HCT116 (cell line): ENCODE measurements at regions of chr18 and their contacts with region 1.

Region 1: GRCh38 chr18:9136315-9137155 is at the start of gene ANKRD12:
- DNase-seq: peak; percentile 89
- ATAC-seq: peak; percentile 78
- H3K4me3 ChIP-seq: peak within 1 kb of the TSS; percentile 85 to 86
- H3K27ac ChIP-seq: peak within 1 kb of the TSS; percentile 97
- H3K4me1 ChIP-seq: peaks cover 17 to 26% of the 10 kb centered on the region in 2 experiments; a peak in 3 of 4 replicates
- H3K27me3 ChIP-seq: no peaks in the 10 kb centered on the region
- CTCF ChIP-seq: no peak
- POLR2A ChIP-seq: peak; percentile 8
- RAD21 ChIP-seq: no peak
- total RNA-seq, gene ANKRD12: 23.5 TPM

Region 2: DNA sequence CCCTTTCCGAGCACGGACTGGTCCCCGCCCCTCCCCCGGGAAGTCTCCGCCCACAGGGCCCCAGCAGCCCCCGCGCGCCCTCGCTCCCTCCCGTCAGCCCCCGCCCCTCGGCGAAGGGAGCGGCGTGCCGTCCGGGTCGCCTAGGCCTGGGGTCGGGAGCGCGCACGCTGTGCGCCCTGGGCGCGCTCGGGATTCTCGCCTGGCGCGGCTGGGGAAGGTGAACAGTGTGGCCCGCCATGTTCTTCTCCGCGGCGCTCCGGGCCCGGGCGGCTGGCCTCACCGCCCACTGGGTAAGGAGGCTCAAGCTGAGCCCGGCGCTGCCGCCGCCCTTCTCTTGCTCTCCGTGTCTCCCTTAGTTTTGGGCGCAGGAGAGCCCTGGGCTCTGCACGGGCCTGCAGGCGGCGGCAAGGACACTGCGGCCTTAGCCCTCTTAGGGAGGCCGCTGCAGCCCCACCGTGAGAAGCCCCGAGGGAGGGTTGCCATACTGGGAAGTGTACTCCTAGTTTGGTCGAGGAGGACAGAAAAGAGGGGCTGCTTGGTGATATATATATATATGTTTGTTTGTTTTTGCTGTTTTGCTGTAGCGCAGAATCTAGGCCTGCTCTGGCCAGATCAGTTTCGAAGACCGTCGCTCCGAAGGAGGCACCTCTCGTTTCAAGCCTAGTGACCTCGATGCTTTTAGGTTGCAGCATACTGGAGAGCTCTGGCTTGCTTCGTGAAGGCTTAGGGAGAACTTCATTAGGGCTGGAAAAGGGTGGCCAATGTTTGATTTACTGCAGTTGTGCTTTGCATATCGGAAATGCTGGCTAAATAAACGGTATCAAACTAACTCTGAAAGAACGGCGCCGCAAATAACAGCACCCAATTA is 33.8 kb before region 1 on chr18 and contains the start of gene NDUFV2:
- CTCF ChIA-PET with region 1: no interaction called
- POLR2A ChIA-PET with region 1: interaction called, 3 read pairs
- RAD21 ChIA-PET with region 1: no interaction called
- intact Hi-C with region 1: loop called (anchors 2 kb)
- DNase-seq: peak; percentile 86
- ATAC-seq: peak; percentile 95
- H3K4me3 ChIP-seq: peak within 1 kb of the TSS; percentile 69 to 81
- H3K27ac ChIP-seq: peak within 1 kb of the TSS; percentile 84
- H3K4me1 ChIP-seq: peaks cover 10 to 21% of the 10 kb centered on the region in 2 experiments
- H3K27me3 ChIP-seq: no peaks in the 10 kb centered on the region
- CTCF ChIP-seq: no peak
- POLR2A ChIP-seq: peak; percentile 59
- RAD21 ChIP-seq: no peak
- total RNA-seq, gene NDUFV2: 194 TPM

Region 3: DNA sequence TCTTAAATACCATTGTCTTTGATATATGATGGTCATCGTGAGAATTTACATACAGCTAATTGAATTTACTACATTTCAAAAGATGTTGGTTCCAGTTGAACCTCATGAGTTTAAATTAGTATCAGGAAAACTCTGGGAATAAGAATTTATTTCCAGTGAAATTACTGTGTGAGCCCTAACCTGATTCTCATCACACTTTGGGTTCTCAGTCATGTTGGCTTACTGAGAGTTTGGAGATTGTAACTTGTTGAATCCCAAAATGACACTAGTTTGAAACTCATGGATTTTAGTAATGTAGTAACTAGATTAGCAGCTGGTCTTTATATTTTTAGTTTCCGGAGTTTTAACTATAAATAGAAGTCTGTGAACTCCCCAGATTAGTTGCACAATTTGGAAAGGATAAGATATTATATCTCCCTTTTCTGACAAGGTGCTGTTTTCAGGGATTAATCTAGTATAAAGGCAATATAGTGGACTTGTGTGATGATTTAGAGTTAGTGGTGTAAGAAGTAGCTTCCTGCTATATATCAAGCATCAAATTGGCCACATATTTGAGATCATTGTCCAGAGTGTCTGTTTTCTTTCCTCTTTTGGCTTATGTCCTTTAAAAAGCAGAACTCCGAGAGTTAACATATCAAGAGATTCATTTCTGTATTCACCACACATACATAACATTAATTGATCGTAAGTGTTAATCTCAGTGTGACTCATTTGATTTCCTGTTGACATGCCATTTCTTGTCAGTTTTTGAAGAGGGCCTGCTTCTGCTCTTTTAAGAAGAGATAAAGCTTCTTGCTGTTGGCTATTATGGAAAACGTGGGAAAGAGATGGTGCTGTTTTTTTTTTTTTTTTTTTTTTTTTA is 18.3 kb before region 1 on chr18:
- CTCF ChIA-PET with region 1: no interaction called
- POLR2A ChIA-PET with region 1: interaction called, 3 read pairs
- RAD21 ChIA-PET with region 1: no interaction called
- intact Hi-C with region 1: loop called (anchors 2 kb)
- DNase-seq: no peak
- ATAC-seq: no peak
- H3K4me3 ChIP-seq: no peak overlapping the region
- H3K27ac ChIP-seq: no peak overlapping the region; the same call in 1 of the 2 replicates
- H3K4me1 ChIP-seq: peaks cover 29 to 49% of the 10 kb centered on the region in 2 experiments
- H3K27me3 ChIP-seq: no peaks in the 10 kb centered on the region
- CTCF ChIP-seq: no peak
- POLR2A ChIP-seq: no peak
- RAD21 ChIP-seq: no peak

Region 4: DNA sequence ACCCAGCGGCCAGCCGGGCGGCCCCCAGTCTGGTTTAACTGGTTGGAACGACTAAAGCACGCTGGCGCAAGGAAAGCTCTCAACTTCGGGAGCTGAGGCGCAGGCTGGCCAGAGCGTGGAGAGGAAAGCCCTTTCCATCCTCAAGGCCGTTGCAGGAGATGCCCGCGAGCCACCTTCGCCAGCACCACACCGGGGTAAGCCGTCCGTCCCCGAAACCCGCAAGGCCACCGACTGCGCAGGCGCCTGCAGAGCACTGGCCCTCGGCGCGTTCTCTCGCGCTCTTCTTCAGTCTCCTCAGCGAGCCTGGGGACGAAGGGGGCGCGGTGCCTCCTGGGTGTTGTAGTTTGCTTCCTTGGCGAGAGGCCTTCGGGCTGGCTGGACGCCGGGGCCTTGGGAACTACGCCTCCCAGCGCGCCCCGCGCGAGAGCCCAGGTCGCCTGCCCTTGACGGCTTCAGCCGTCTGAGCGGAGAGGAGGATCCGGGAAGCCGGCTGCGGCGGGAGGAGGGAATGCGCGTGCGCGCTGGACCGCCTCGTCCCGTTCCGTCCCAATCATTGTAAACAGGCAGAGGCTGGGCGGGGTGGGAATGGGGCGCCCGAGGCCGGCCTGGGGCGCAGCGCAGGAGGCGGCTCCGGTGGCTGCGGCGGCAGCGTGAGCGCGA is 338.6 kb after region 1 on chr18 and contains the start of gene RALBP1:
- CTCF ChIA-PET with region 1: no interaction called
- POLR2A ChIA-PET with region 1: no interaction called
- RAD21 ChIA-PET with region 1: no interaction called
- intact Hi-C with region 1: loop called (anchors 5 kb)
- DNase-seq: peak; percentile 98
- ATAC-seq: peak; percentile 91
- H3K4me3 ChIP-seq: peak within 1 kb of the TSS; percentile 89 to 90
- H3K27ac ChIP-seq: peak within 1 kb of the TSS; percentile 83
- H3K4me1 ChIP-seq: peaks cover 7 to 23% of the 10 kb centered on the region in 2 experiments
- H3K27me3 ChIP-seq: no peaks in the 10 kb centered on the region
- CTCF ChIP-seq: no peak
- POLR2A ChIP-seq: peak; percentile 73
- RAD21 ChIP-seq: no peak
- total RNA-seq, gene RALBP1: 66.2 TPM